H1 (cell line): ENCODE measurements at regions of chr2 and their contacts with region 1.

Region 1: DNA sequence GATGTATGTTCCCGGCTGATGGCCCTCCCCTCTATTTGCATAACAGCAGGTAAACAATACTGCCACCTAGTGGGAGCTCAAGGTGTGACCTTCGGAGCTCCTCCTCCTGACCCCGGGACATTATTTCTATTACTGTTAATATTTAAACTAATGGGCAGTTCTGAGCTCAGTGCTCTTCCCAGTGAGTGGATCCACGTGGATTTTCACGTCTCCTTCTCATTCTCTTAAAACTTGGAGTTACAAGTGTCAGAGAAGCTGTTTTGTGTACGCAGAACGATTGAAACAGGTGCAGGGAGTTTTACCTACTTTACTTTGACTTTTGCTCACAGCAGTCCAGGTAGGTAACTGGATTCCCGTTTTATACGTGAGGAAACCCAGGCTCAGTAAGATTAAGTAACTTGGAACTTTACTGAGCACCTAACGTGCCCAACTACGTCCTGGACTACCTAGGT is 127.3 kb downstream of the PRKCE start:
- DNase-seq: peak; percentile 15 to 78
- H3K4me3 ChIP-seq: no peak overlapping the region
- H3K27ac ChIP-seq: no peak overlapping the region
- H3K4me1 ChIP-seq: no peaks in the 10 kb centered on the region
- H3K27me3 ChIP-seq: no peaks in the 10 kb centered on the region
- CTCF ChIP-seq: peak; percentile 51 to 63 (median 60)
- EP300 ChIP-seq: no peak
- POLR2A ChIP-seq: no peak
- RAD21 ChIP-seq: peak; percentile 62 to 68

Region 2: DNA sequence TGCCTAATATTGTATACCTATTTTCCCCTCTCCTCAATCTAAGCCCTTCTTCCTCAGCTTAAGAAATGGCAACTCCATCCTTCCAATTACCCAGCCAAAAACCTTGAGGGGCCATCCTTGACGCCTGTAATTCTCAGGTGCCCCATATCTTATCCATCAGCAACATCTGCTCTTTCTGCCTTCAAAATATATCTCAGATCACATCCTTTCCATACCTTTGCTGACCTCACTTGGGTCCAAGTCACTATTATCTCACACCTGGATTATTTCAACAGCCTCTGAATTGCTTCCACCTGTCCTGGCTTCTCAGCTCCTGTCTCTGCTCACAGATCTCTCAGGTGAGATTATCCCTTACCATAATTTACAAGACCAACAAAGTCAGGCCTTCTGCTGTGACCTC is 119.6 kb before region 1 on chr2:
- CTCF ChIA-PET with region 1: interaction called, 12 read pairs
- POLR2A ChIA-PET with region 1: no interaction called
- DNase-seq: no peak
- H3K4me3 ChIP-seq: no peak overlapping the region
- H3K27ac ChIP-seq: no peak overlapping the region
- H3K4me1 ChIP-seq: no peaks in the 10 kb centered on the region
- H3K27me3 ChIP-seq: peaks cover 2 to 14% (median 5%) of the 10 kb centered on the region in 4 experiments; a peak in 4 of 7 replicates
- CTCF ChIP-seq: no peak
- EP300 ChIP-seq: no peak
- POLR2A ChIP-seq: no peak
- RAD21 ChIP-seq: no peak

Region 3: DNA sequence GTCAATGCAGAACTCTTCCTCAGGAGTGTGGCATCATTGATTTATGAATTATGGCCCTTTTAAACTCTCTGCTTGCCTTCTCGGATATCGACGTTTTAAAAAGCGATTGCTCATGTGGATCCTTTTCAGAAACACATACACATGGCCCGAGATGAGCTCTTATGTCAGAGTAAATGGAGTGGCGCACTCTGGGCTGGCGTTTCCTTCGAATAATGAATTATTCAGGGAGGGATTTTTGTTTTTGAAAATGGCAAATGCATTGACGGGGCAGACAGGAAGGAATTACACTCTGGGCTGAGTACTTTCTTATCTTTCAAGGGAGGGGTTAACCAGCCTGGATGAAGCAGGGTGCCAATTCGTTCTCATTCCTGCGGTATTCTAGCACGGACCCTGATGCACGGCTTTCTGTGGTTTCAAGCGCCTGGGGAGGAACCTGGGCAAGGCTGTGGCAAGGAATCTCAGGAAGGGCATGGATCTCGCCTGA is 15.4 kb after region 1 on chr2:
- CTCF ChIA-PET with region 1: interaction called, 136 read pairs
- POLR2A ChIA-PET with region 1: interaction called, 3 read pairs
- DNase-seq: no peak
- H3K4me3 ChIP-seq: no peak overlapping the region
- H3K27ac ChIP-seq: no peak overlapping the region
- H3K4me1 ChIP-seq: peaks cover 0 to 1% (median 0%) of the 10 kb centered on the region in 4 experiments; a peak in 1 of 7 replicates
- H3K27me3 ChIP-seq: no peaks in the 10 kb centered on the region
- CTCF ChIP-seq: no peak
- EP300 ChIP-seq: no peak
- POLR2A ChIP-seq: no peak
- RAD21 ChIP-seq: no peak

Region 4: DNA sequence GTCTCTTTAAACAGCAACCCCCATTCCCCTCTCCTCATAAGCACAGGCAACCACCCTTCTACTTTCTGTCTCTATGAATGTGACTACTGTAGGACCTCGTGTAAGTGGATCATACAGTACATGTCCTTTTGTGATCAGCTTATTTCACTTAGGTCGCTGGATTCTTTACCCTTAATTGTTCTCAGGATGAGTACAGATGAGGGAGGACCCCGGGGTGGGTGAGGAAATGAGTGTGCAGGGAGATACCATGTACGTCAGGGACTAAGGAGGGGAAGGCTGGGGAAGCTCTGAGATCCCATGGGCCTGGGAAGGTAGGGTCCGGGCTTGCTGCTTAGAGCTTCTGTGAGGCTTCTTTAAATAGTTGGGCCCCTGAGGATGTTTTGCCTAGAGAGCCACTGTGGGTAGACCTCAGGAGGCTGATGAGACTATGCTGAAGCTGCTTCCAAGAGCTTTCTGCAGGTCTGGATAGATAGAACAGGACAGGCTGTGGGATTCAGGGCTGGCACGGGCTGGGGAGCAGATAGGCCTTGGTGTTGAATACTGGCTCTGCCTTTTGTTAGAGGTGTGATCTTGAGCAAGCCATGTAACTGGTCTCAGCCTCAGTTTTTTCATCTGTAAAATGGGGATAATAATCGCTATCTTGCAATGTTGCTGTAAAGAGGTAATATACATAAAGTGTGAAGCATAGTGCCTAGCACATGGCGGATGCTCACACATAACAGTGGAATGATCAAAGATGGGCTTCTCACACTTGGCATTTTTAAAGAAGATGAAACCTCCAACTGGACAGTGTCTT is 28.0 kb after region 1 on chr2:
- CTCF ChIA-PET with region 1: interaction called, 18 read pairs
- POLR2A ChIA-PET with region 1: no interaction called
- DNase-seq: no peak
- H3K4me3 ChIP-seq: no peak overlapping the region
- H3K27ac ChIP-seq: no peak overlapping the region
- H3K4me1 ChIP-seq: no peaks in the 10 kb centered on the region
- H3K27me3 ChIP-seq: no peaks in the 10 kb centered on the region
- CTCF ChIP-seq: no peak
- EP300 ChIP-seq: no peak
- POLR2A ChIP-seq: no peak
- RAD21 ChIP-seq: no peak

Region 5: GRCh38 chr2:45935791-45936622 is 157.3 kb after region 1 on chr2:
- CTCF ChIA-PET with region 1: interaction called, 13 read pairs
- POLR2A ChIA-PET with region 1: no interaction called
- DNase-seq: peak in 1 of 2 experiments; percentile 88
- H3K4me3 ChIP-seq: no peak overlapping the region
- H3K27ac ChIP-seq: no peak overlapping the region
- H3K4me1 ChIP-seq: peaks cover 0 to 2% (median 0%) of the 10 kb centered on the region in 4 experiments; a peak in 2 of 7 replicates
- H3K27me3 ChIP-seq: no peaks in the 10 kb centered on the region
- CTCF ChIP-seq: peak; percentile 63 to 86 (median 81)
- EP300 ChIP-seq: no peak
- POLR2A ChIP-seq: no peak
- RAD21 ChIP-seq: peak; percentile 93 to 94